Naive thymus-derived CD4-positive, alpha-beta T cell (primary cell): ENCODE measurements at regions of chr14 and their contacts with region 1.

Region 1: GRCh38 chr14:106511006-106511799 is 984.8 kb downstream of the TMEM121 start:
- DNase-seq: peak; percentile 36 to 83 (median 74)
- ATAC-seq: peak; percentile 79
- H3K4me3 ChIP-seq: peak overlapping the region; percentile 12
- H3K4me3 Mint-ChIP-seq: peak overlapping the region; percentile 52 to 88 (median 74)
- H3K27ac ChIP-seq: peak overlapping the region; percentile 70
- H3K27ac Mint-ChIP-seq: peak overlapping the region; percentile 85 to 100 (median 95)
- H3K4me1 ChIP-seq: peaks cover 44 to 71% of the 10 kb centered on the region in 2 donors
- H3K4me1 Mint-ChIP-seq: peaks cover 40 to 91% (median 79%) of the 10 kb centered on the region in 7 donors
- H3K27me3 ChIP-seq: no peaks in the 10 kb centered on the region
- H3K27me3 Mint-ChIP-seq: peaks cover 0 to 44% (median 0%) of the 10 kb centered on the region in 5 donors

Region 2: DNA sequence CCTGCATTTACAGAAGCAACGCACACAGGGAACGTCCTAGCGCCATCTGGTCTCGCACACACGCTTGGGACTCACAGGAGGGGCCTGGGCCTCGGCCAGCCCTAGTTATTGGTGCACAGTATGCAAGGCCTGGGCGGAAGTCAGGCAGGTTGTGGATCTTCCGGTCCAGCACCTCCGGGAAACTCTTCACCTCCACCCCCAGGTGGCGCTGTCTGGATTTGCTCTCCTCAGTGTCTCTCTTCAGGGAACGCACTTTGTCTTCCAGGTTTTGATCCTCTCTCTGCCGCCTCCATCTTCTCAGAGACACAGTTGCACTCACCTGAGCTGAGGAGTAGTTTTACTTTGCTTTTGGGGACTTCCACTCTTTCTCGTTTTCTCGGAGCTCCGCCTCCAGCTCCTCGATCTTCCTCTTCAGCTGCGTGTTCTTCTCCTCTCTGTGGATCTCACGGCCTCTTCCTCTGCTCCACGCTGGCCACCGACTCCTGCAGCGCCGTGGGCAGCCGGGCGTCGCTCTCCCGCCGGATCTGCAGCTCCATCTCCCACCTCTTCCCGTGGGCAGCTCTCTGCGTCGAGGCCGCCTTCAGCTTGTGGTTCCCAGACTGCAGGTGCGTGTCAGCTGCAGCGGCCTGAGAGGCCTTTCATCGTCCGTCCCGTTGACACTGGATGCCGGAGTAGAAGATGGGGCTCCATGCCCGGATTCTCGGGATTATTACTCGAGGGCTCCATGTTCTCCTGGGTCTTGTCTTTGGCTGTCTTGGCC is 51.1 kb before region 1 on chr14:
- CTCF ChIA-PET with region 1: interaction called, 15 read pairs
- POLR2A ChIA-PET with region 1: interaction called, 4 read pairs
- intact Hi-C with region 1: loop called (anchors 1 to 2 kb)
- DNase-seq: peak; percentile 41 to 67 (median 56)
- ATAC-seq: peak; percentile 79
- H3K4me3 ChIP-seq: no peak overlapping the region
- H3K4me3 Mint-ChIP-seq: peak overlapping the region in 1 of 10 donors; percentile 42
- H3K27ac ChIP-seq: no peak overlapping the region
- H3K27ac Mint-ChIP-seq: peak overlapping the region in 1 of 9 donors; percentile 74
- H3K4me1 ChIP-seq: peaks cover 0 to 4% of the 10 kb centered on the region in 2 donors
- H3K4me1 Mint-ChIP-seq: peaks cover 0 to 9% (median 0%) of the 10 kb centered on the region in 7 donors
- H3K27me3 ChIP-seq: no peaks in the 10 kb centered on the region
- H3K27me3 Mint-ChIP-seq: peaks cover 0 to 22% (median 3%) of the 10 kb centered on the region in 5 donors

Region 3: GRCh38 chr14:106493962-106494823 is 17.0 kb before region 1 on chr14:
- CTCF ChIA-PET with region 1: interaction called, 5 read pairs
- POLR2A ChIA-PET with region 1: interaction called, 11 read pairs
- intact Hi-C with region 1: loop called in 1 of 2 experiments (anchors 2 kb)
- DNase-seq: no peak
- ATAC-seq: peak; percentile 36
- H3K4me3 ChIP-seq: peak overlapping the region; percentile 28
- H3K4me3 Mint-ChIP-seq: peak overlapping the region; percentile 74 to 90 (median 84)
- H3K27ac ChIP-seq: peak overlapping the region; percentile 8
- H3K27ac Mint-ChIP-seq: peak overlapping the region in 8 of 9 donors; percentile 50 to 84 (median 76)
- H3K4me1 ChIP-seq: no peaks in the 10 kb centered on the region
- H3K4me1 Mint-ChIP-seq: peaks cover 6 to 18% (median 15%) of the 10 kb centered on the region in 7 donors
- H3K27me3 ChIP-seq: no peaks in the 10 kb centered on the region
- H3K27me3 Mint-ChIP-seq: peaks cover 0 to 10% (median 0%) of the 10 kb centered on the region in 5 donors

Region 4: GRCh38 chr14:106670011-106670410 is 158.8 kb after region 1 on chr14:
- CTCF ChIA-PET with region 1: no interaction called
- POLR2A ChIA-PET with region 1: no interaction called
- intact Hi-C with region 1: no loop called
- DNase-seq: no peak
- ATAC-seq: no peak
- H3K4me3 ChIP-seq: no peak overlapping the region
- H3K4me3 Mint-ChIP-seq: no peak overlapping the region
- H3K27ac ChIP-seq: no peak overlapping the region
- H3K27ac Mint-ChIP-seq: no peak overlapping the region
- H3K4me1 ChIP-seq: peaks cover 0 to 6% of the 10 kb centered on the region in 2 donors
- H3K4me1 Mint-ChIP-seq: peaks cover 0 to 14% (median 7%) of the 10 kb centered on the region in 7 donors
- H3K27me3 ChIP-seq: no peaks in the 10 kb centered on the region
- H3K27me3 Mint-ChIP-seq: peaks cover 14 to 48% (median 18%) of the 10 kb centered on the region in 5 donors